H1 (cell line): ENCODE measurements at regions of chr20 and their contacts with region 1.

Region 1: DNA sequence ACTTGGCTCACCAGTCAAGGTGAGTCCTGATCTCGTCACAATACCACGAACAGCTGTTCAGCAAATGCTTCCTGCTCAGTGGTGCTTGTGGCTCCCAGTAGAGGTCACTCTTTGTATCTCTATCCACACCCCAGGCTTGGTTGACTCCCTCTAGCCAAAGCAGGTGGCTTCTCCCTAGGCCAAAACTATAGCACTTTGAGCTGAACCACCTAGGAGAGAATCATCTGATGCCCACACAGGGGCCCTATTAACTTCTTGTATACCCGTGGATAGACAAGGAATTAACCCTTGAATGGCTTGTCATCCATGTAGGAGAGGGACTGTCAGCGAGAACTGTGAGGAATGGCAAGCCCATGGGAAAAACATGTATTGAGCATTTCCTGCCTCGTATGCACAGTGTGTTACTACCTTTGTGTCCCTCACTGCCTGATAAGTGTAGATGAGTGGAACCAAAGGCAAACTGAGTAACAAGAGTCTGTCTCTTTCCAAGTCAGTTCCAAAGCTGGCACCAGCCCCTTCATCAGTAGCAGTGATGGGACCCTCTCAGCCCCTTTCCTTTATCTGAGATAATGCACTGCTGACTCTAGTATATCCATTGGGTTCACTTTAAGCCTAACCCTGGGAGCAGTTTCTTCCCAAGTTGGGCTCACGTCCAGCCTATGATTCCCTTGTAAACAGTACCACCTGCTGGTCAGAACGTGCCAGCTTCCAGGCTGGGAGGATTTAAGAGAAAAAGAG is 42.5 kb downstream of the EIF2S2 start:
- DNase-seq: peak; percentile 53 to 79
- H3K4me3 ChIP-seq: no peak overlapping the region
- H3K27ac ChIP-seq: no peak overlapping the region
- H3K4me1 ChIP-seq: peaks cover 0 to 9% (median 5%) of the 10 kb centered on the region in 4 experiments; a peak in 5 of 7 replicates
- H3K27me3 ChIP-seq: no peaks in the 10 kb centered on the region
- CTCF ChIP-seq: peak; percentile 57 to 94 (median 89)
- EP300 ChIP-seq: no peak
- POLR2A ChIP-seq: no peak
- RAD21 ChIP-seq: peak; percentile 96 to 98

Region 2: DNA sequence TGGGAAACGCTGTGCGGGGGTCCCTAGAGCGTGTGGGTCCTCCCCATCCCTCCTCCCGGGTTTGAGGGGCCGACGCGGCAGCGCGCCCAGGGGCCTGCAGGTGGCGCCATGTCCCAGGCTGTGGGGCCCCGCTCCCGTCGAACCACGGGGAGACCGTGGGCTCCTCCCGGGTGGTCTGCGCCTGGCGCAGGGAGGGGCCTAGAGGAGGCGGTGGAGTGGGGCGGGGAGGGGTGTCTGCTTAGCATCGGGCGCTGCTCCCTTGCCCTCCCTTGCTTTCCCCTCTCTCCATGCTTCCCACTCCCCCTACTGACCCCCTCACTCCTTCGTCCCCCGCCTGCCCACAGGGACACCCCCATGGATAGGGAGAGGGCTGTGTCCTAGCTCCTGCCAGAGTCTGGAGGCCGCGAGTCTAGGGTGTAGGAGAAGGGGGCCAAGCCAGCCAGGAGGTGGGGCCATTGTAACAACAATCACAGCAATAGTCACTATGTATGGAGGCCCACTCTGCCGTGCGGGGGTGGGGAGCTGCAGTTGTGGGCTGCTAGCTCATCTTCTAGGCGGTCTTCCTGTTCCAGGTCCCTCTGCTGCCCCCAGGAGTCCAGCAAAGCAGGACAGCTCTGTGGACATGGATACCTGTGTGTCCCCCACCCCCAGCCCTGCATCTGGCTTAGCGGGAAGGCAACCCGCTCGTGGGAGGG is 206.7 kb before region 1 on chr20:
- CTCF ChIA-PET with region 1: interaction called, 32 read pairs
- POLR2A ChIA-PET with region 1: no interaction called
- DNase-seq: peak; percentile 46 to 93
- H3K4me3 ChIP-seq: peak overlapping the region in 1 of 4 experiments; percentile 52; a peak in 4 of 8 replicates
- H3K27ac ChIP-seq: no peak overlapping the region
- H3K4me1 ChIP-seq: peaks cover 0 to 5% (median 4%) of the 10 kb centered on the region in 4 experiments; a peak in 4 of 7 replicates
- H3K27me3 ChIP-seq: no peaks in the 10 kb centered on the region
- CTCF ChIP-seq: peak; percentile 84 to 89 (median 88)
- EP300 ChIP-seq: no peak
- POLR2A ChIP-seq: no peak
- RAD21 ChIP-seq: peak; percentile 89 to 90

Region 3: DNA sequence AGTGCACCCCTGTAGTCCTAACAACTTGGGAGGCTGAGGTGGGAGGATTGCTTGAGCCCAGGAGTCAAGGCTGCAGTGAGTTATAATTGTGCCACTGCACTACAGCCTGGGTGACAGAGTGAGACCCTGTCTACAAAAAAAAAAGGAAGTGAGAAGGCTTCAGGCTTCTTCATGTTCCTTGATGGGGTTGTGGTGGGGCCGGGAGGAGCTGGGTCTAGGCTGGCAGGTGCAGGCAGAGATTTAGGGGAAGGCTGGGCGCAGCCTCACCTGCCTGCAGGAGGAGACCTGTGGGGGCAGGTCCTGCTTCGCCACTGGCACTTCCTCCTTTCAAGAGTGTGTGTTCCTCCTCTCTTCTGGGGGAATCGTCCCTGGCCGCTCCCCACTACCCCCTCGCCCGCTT is 194.5 kb before region 1 on chr20:
- CTCF ChIA-PET with region 1: no interaction called
- POLR2A ChIA-PET with region 1: no interaction called
- DNase-seq: no peak
- H3K4me3 ChIP-seq: no peak overlapping the region
- H3K27ac ChIP-seq: no peak overlapping the region
- H3K4me1 ChIP-seq: no peaks in the 10 kb centered on the region
- H3K27me3 ChIP-seq: no peaks in the 10 kb centered on the region
- CTCF ChIP-seq: no peak
- EP300 ChIP-seq: no peak
- POLR2A ChIP-seq: no peak
- RAD21 ChIP-seq: no peak

Region 4: GRCh38 chr20:33933469-33933909 is 136.0 kb before region 1 on chr20:
- CTCF ChIA-PET with region 1: interaction called, 78 read pairs
- POLR2A ChIA-PET with region 1: no interaction called
- DNase-seq: peak; percentile 51 to 70
- H3K4me3 ChIP-seq: no peak overlapping the region
- H3K27ac ChIP-seq: no peak overlapping the region
- H3K4me1 ChIP-seq: no peaks in the 10 kb centered on the region
- H3K27me3 ChIP-seq: no peaks in the 10 kb centered on the region
- CTCF ChIP-seq: peak; percentile 80 to 92 (median 82)
- EP300 ChIP-seq: no peak
- POLR2A ChIP-seq: no peak
- RAD21 ChIP-seq: peak; percentile 90 to 94

Region 5: GRCh38 chr20:33947709-33948295 is 121.7 kb before region 1 on chr20:
- CTCF ChIA-PET with region 1: interaction called, 29 read pairs
- POLR2A ChIA-PET with region 1: no interaction called
- DNase-seq: peak; percentile 59 to 82
- H3K4me3 ChIP-seq: no peak overlapping the region
- H3K27ac ChIP-seq: no peak overlapping the region
- H3K4me1 ChIP-seq: no peaks in the 10 kb centered on the region
- H3K27me3 ChIP-seq: no peaks in the 10 kb centered on the region
- CTCF ChIP-seq: peak; percentile 87 to 100 (median 99)
- EP300 ChIP-seq: no peak; a peak in 1 of 3 replicates
- POLR2A ChIP-seq: no peak
- RAD21 ChIP-seq: peak; percentile 91 to 94

Region 6: GRCh38 chr20:34022154-34022838 is 47.2 kb before region 1 on chr20:
- CTCF ChIA-PET with region 1: interaction called, 13 read pairs
- POLR2A ChIA-PET with region 1: no interaction called
- DNase-seq: no peak
- H3K4me3 ChIP-seq: no peak overlapping the region
- H3K27ac ChIP-seq: no peak overlapping the region
- H3K4me1 ChIP-seq: peaks cover 2 to 15% (median 9%) of the 10 kb centered on the region in 4 experiments; a peak in 5 of 7 replicates
- H3K27me3 ChIP-seq: no peaks in the 10 kb centered on the region
- CTCF ChIP-seq: peak in 2 of 3 experiments; percentile 43 to 48; a peak in 2 of 4 replicates
- EP300 ChIP-seq: no peak
- POLR2A ChIP-seq: no peak
- RAD21 ChIP-seq: peak; percentile 58 to 73

Region 7: GRCh38 chr20:34042262-34042661 is 27.2 kb before region 1 on chr20:
- CTCF ChIA-PET with region 1: interaction called, 18 read pairs
- POLR2A ChIA-PET with region 1: interaction called, 3 read pairs
- DNase-seq: no peak
- H3K4me3 ChIP-seq: no peak overlapping the region
- H3K27ac ChIP-seq: no peak overlapping the region
- H3K4me1 ChIP-seq: peaks cover 6 to 17% (median 9%) of the 10 kb centered on the region in 4 experiments
- H3K27me3 ChIP-seq: no peaks in the 10 kb centered on the region
- CTCF ChIP-seq: no peak
- EP300 ChIP-seq: no peak
- POLR2A ChIP-seq: no peak
- RAD21 ChIP-seq: no peak

Region 8: GRCh38 chr20:34083137-34083536 is 13.6 kb after region 1 on chr20:
- CTCF ChIA-PET with region 1: interaction called, 21 read pairs
- POLR2A ChIA-PET with region 1: interaction called, 5 read pairs
- DNase-seq: no peak
- H3K4me3 ChIP-seq: no peak overlapping the region
- H3K27ac ChIP-seq: no peak overlapping the region
- H3K4me1 ChIP-seq: no peaks in the 10 kb centered on the region
- H3K27me3 ChIP-seq: no peaks in the 10 kb centered on the region
- CTCF ChIP-seq: no peak
- EP300 ChIP-seq: no peak
- POLR2A ChIP-seq: no peak
- RAD21 ChIP-seq: no peak; a peak in 1 of 4 replicates